AG04449 (cell line): ENCODE measurements at regions of chr19 and their contacts with region 1.

Region 1: GRCh38 chr19:4633140-4633967 is 6.0 kb upstream of the TNFAIP8L1 start:
- DNase-seq: no peak
- H3K4me3 ChIP-seq: no peak overlapping the region
- CTCF ChIP-seq: peak; percentile 78

Region 2: DNA sequence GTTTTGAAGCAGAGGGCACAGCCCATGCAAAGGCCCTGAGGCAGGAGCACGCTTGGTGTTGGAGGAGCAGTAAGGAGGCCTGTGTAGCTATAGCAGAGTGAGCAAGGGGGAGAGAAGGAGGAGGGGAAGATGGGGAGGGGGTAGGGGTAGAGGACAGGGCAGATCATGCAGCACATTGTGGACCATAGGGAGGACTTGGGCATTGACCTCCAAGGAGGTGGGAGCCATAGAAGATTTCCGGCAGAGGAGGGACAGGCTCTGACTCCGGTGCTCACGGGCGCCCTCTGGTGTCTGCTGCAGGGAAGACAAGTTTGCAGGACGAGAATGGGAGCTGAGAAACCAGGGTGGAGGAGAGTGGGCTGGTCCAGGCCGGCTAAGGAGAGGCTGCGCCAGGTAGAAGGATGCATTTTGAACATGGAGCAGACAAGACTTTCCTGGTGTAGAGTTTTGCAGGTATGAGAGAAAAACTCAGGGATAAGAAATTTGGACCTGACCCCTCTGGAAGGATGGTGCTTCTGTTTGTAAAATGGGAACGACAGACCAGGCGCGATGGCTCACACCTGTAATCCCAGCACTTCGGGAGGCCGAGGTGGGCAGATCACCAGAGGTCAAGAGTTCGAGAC is 493.6 kb before region 1 on chr19:
- CTCF ChIA-PET with region 1: no interaction called
- POLR2A ChIA-PET with region 1: no interaction called
- DNase-seq: no peak
- H3K4me3 ChIP-seq: no peak overlapping the region
- CTCF ChIP-seq: peak; percentile 81

Region 3: DNA sequence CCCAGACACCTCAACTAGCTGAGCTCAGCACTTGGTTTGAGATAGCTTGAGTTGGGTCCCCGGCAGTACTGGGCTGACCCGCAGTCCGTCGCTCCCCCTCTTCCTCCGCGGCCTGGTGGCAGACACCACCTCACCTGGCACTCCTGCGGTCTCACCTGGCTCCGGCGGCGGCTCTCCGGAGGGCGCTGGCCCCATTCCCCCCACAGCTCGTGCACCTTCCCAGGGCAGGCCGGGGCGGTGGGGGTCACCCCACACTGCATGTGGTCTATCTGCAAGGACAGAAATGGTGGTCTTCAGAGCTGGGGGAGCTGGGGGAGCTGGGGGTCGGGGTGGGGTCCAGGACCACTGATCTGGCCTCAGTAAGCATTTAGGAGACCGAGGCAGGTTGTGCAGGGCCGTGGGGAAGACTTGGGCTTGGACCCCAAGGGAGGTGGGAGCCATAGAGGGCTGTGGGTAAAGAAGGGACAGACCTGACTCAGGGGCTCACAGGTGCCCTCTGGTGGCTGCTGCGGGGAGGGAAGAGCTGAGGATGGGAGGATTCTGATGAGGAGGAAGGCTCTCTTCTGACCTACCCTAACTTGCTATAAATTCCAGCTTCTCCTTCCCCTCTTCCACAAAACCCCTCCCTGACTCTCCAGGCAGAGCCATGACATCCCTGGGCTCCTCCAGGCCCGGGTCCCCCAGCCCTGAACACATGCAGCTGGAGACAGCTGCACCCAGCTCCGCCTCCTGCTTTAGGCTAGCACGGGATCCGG is 108.4 kb before region 1 on chr19:
- CTCF ChIA-PET with region 1: interaction called, 36 read pairs
- POLR2A ChIA-PET with region 1: no interaction called
- DNase-seq: no peak
- H3K4me3 ChIP-seq: no peak overlapping the region
- CTCF ChIP-seq: peak; percentile 83

Region 4: GRCh38 chr19:4557971-4558941 is 75.1 kb before region 1 on chr19:
- CTCF ChIA-PET with region 1: interaction called, 43 read pairs
- POLR2A ChIA-PET with region 1: interaction called, 3 read pairs
- DNase-seq: no peak
- H3K4me3 ChIP-seq: no peak overlapping the region
- CTCF ChIP-seq: peak; percentile 94

Region 5: GRCh38 chr19:4567584-4568071 is 65.7 kb before region 1 on chr19:
- CTCF ChIA-PET with region 1: interaction called, 143 read pairs
- POLR2A ChIA-PET with region 1: no interaction called
- DNase-seq: no peak
- H3K4me3 ChIP-seq: no peak overlapping the region
- CTCF ChIP-seq: peak; percentile 94

Region 6: DNA sequence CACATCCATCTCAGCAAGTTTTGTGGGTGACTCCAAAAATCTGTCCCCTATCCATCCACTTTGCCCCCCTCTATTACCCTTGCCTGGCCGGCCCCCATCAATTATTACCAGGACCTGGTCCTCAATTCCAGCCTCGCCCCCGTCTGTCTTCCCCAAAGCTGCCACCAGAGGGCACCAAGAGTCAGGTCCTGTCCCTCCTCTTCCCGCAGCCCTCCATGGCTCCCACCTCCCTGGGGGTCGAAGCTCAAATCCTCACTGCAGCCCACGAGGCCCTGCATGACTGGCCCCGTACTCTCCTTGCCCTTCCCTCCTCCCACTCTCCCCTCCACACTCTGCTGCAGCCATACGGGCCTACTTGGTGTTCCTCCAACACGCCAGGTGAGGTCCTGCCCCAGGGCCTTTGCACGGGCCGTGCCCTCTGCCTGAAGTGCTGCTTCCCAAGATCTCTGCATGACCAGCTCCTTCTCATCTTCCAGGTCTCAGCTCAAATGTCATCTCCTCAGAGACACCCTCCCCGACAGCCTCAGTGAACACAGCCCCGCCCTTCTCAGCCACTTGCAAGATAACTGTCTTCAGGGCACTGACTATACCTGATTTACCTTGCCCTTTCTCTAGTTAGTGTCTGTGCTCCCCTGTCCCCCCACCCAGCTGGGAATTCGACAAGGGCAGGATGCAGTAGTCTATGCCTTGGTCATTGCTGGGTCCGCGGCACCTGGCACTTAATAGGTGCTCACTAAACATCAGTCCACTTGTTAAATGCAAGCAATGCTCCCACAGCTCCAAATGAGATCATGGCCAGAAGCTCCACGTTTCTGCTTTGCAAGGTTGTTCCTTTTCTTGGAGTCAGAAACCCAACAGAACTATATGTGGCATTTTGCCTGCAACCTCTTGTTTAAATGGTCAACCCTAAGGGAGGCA is 57.1 kb before region 1 on chr19:
- CTCF ChIA-PET with region 1: interaction called, 143 read pairs
- POLR2A ChIA-PET with region 1: no interaction called
- DNase-seq: no peak
- H3K4me3 ChIP-seq: no peak overlapping the region
- CTCF ChIP-seq: peak; percentile 79

Region 7: DNA sequence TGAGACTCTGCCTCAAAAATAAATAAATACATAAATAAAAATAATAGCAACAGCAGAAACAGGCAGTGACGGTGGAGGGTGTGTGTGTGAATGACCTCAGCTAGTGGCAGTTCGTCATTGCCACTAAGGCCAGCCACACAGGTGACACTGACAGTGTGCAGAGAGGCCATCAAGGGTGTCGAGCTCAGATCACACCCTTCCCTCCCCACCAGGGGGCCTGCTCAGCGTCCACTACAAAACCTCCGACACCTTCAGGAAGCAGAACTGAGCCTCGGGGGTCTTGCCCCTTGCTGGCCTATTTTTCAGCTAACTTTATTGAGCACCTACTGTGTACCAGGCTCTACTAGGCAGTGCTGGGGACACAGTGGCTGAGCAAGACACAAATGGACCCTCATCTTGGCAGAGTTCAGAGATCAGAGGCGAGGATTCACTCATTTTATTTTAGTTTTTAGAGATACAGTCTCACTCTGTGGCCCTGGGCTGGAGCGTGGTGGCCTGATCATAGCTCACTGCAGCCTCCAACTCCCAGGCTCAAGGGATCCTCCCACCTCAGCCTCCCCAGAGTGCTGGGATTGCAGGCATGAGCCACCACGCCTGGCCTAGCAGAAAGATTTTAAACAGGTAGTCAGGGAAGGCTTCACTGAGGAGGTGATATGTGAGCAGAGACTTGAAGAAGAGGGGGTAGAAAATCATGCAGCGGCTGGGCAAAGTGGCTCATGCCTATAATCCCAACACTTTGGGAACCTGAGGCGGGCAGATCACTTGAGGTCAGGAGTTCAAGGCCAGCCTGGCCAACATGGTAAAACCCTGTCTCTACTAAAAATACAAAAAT is 43.6 kb before region 1 on chr19:
- CTCF ChIA-PET with region 1: interaction called, 19 read pairs
- POLR2A ChIA-PET with region 1: no interaction called
- DNase-seq: no peak
- H3K4me3 ChIP-seq: no peak overlapping the region
- CTCF ChIP-seq: peak; percentile 60